ENCODE measurements at regions of chr9 and their contacts with region 1.

Region 1: DNA sequence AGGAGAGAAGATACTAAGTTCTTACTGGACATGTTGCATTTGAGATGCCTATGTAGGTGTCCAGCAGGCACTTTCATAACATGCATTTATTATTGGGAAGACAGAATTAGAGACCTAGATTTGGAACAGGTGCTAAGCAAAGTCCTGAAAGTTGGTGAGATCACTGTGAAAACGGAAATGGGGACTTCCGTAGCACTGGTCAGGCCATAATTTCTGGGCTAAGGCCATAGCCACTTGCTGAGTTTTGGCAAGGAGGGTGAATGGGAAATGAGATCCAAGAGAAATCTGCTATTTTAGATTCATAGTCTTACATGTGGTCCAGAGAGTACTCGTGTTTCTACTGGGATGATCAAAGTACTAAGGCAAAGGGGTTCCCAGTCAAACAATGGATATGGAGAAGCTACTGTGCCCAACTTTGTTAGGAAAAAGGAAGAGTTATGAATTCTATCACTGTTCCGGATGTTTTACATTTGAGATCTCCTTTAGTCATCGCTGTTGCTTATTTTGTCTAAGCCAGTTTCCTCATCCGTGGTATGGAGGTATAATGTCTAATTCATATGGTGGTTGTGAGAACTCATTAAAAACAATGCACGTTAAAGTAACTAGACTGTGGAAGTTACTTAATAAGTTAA is 33.4 kb downstream of the TEK start:
- DNase-seq: no peak
- ATAC-seq: no peak
- H3K4me3 ChIP-seq: no peak overlapping the region
- H3K4me3 Mint-ChIP-seq: no peak overlapping the region
- H3K27ac ChIP-seq: no peak overlapping the region
- H3K27ac Mint-ChIP-seq: no peak overlapping the region
- H3K4me1 ChIP-seq: no peaks in the 10 kb centered on the region
- H3K4me1 Mint-ChIP-seq: no peaks in the 10 kb centered on the region
- H3K27me3 ChIP-seq: no peaks in the 10 kb centered on the region
- H3K27me3 Mint-ChIP-seq: no peaks in the 10 kb centered on the region
- CTCF ChIP-seq: no peak

Region 2: GRCh38 chr9:27108981-27109541 is 33.4 kb before region 1 on chr9 and contains the start of gene TEK:
- CTCF ChIA-PET with region 1: no interaction called
- POLR2A ChIA-PET with region 1: no interaction called
- intact Hi-C with region 1: loop called (anchors 5 kb)
- DNase-seq: no peak
- ATAC-seq: no peak
- H3K4me3 ChIP-seq: no peak within 1 kb of the TSS
- H3K4me3 Mint-ChIP-seq: no peak within 1 kb of the TSS
- H3K27ac ChIP-seq: no peak within 1 kb of the TSS
- H3K27ac Mint-ChIP-seq: no peak within 1 kb of the TSS
- H3K4me1 ChIP-seq: no peaks in the 10 kb centered on the region
- H3K4me1 Mint-ChIP-seq: no peaks in the 10 kb centered on the region
- H3K27me3 ChIP-seq: no peaks in the 10 kb centered on the region
- H3K27me3 Mint-ChIP-seq: peaks cover 8% of the 10 kb centered on the region
- CTCF ChIP-seq: no peak
- total RNA-seq, gene TEK: not detected in 2 replicates

Region 3: DNA sequence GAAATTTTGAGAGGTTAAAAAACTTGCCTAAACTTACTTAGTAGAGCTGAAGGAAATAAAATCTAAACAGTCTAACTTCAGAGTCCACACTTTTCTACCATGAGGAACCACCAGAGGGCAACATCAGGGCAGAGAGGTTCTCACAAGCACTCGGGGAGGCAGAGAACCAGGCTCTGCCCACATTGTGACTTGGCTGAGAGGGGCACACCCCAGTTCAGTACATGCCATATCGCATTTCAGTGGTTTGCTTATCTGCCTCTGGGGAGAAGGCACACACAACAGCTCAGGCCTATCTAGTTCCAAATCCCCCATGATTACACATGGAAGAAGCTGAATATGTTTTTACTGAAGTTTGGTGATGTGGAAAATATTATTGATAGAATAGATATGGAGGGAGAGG is 105.3 kb after region 1 on chr9:
- CTCF ChIA-PET with region 1: no interaction called
- POLR2A ChIA-PET with region 1: no interaction called
- intact Hi-C with region 1: no loop called
- DNase-seq: peak; percentile 27
- ATAC-seq: peak; percentile 21
- H3K4me3 ChIP-seq: no peak overlapping the region
- H3K4me3 Mint-ChIP-seq: no peak overlapping the region
- H3K27ac ChIP-seq: no peak overlapping the region
- H3K27ac Mint-ChIP-seq: no peak overlapping the region
- H3K4me1 ChIP-seq: no peaks in the 10 kb centered on the region
- H3K4me1 Mint-ChIP-seq: no peaks in the 10 kb centered on the region
- H3K27me3 ChIP-seq: peaks cover 0 to 4% (median 0%) of the 10 kb centered on the region in 4 experiments
- H3K27me3 Mint-ChIP-seq: peaks cover 17% of the 10 kb centered on the region
- CTCF ChIP-seq: peak; percentile 59

Region 4: GRCh38 chr9:27499481-27499880 is 357.1 kb after region 1 on chr9:
- CTCF ChIA-PET with region 1: no interaction called
- POLR2A ChIA-PET with region 1: no interaction called
- intact Hi-C with region 1: loop called (anchors 5 kb)
- DNase-seq: no peak
- ATAC-seq: no peak
- H3K4me3 ChIP-seq: no peak overlapping the region
- H3K4me3 Mint-ChIP-seq: no peak overlapping the region
- H3K27ac ChIP-seq: no peak overlapping the region
- H3K27ac Mint-ChIP-seq: no peak overlapping the region
- H3K4me1 ChIP-seq: peaks cover 16 to 22% of the 10 kb centered on the region in 2 donors
- H3K4me1 Mint-ChIP-seq: peaks cover 70% of the 10 kb centered on the region
- H3K27me3 ChIP-seq: no peaks in the 10 kb centered on the region
- H3K27me3 Mint-ChIP-seq: no peaks in the 10 kb centered on the region
- CTCF ChIP-seq: no peak